ENCODE measurements at regions of chr1 and their contacts with region 1.

Region 1: DNA sequence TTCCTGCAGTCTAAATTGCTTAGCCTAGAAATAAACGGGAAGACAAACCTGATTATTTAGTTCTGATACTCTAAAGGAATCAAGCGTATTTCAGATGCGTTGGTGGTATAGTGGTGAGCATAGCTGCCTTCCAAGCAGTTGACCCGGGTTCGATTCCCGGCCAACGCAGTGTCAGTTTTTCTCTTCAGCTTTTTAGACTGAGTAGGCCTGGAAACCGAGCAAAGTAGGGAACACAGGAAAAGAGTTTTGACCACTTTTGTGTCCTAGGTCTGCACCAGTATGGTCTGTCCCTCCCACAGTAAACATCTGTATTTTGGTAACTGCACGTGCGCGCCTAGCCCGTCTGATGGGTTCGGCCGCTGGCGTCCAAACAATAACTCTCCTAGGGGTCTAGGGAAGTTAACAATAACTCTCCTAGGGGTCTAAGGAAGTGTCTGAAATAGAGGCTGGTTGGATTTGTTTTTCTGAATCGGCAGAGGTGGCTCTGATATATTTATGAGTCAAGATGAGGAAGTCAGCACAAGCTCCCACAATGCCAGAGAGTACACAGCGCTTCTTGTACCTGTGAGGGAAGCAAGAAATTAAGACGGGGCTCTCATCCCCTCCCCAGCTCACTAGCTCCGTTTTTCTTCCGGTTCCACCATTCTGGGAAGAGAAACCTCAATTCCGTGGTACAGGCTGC is 15.6 kb upstream of the HJV start:
- DNase-seq: peak; percentile 88
- ATAC-seq: peak; percentile 52
- H3K4me3 Mint-ChIP-seq: peak overlapping the region; percentile 91
- H3K27ac Mint-ChIP-seq: peak overlapping the region; percentile 95
- H3K4me1 Mint-ChIP-seq: peaks cover 48% of the 10 kb centered on the region
- H3K27me3 Mint-ChIP-seq: peaks cover 6% of the 10 kb centered on the region

Region 2: DNA sequence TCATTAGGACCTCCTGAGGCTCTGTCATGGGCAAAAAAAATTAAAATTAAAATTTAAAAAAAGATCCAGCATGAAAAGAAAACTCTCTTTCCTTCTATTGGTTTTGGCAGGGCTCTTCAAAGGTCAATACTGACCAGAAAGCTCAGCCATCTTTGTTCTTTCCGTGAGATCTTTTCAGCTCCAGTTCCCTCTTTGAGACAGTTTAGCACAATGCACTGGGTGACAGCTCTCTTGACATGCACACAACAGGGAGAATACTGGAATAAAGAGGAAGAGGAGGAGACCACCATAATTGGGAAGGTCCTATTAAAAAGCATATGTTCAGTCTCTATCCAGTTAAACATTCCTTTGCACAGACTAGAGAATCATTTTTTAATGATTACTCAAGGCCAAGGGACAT is 85.6 kb before region 1 on chr1:
- CTCF ChIA-PET with region 1: no interaction called
- POLR2A ChIA-PET with region 1: no interaction called
- DNase-seq: no peak
- ATAC-seq: no peak
- H3K4me3 Mint-ChIP-seq: no peak overlapping the region
- H3K27ac Mint-ChIP-seq: no peak overlapping the region
- H3K4me1 Mint-ChIP-seq: peaks cover 42% of the 10 kb centered on the region
- H3K27me3 Mint-ChIP-seq: no peaks in the 10 kb centered on the region

Region 3: GRCh38 chr1:146007506-146008133 is 29.5 kb before region 1 on chr1:
- CTCF ChIA-PET with region 1: interaction called, 10 read pairs
- POLR2A ChIA-PET with region 1: interaction called, 3 read pairs
- DNase-seq: no peak
- ATAC-seq: no peak
- H3K4me3 Mint-ChIP-seq: peak overlapping the region; percentile 69
- H3K27ac Mint-ChIP-seq: peak overlapping the region; percentile 91
- H3K4me1 Mint-ChIP-seq: peaks cover 39% of the 10 kb centered on the region
- H3K27me3 Mint-ChIP-seq: no peaks in the 10 kb centered on the region

Region 4: DNA sequence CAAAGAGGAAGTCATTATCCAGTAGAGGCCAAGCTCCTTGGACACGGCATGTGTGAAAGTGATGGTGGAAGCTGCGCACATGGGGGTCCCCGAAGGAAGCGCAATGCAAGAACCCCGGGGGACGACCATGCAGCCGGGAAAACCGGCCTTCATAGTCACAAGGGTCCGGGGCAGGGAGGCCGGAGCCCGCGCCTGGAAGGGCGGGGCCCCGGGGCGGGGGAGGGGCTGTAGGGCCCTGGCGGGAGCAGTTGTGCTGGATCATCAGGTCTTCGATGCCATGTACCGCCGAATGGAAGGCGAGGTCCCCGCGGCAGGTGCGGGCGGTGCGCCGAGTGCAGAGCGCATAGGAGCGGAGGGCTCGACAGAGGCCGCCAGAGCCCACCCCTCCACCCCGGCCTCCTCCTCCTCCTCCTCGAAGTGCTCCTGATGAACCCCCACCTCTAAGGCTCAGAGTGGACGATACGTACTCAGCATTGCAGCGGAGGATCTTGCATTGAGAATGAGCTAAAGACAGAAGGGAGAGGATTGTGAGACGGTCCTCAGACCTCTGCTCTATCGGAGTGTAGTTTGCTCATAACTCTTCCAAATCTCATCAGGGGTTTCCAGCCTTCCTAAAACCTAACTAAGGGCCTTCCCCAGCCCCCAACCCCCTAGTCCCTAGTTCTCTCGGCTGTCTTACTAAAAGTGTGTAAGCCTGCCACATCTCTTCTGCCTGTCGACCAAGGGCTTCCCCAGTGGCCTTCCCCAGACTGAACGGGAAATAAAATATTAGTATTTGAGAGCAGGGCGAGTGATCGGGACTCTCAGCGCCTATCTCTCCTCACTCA is 17.7 kb before region 1 on chr1:
- CTCF ChIA-PET with region 1: interaction called, 32 read pairs
- POLR2A ChIA-PET with region 1: interaction called, 5 read pairs
- DNase-seq: no peak
- ATAC-seq: peak; percentile 44
- H3K4me3 Mint-ChIP-seq: no peak overlapping the region
- H3K27ac Mint-ChIP-seq: no peak overlapping the region
- H3K4me1 Mint-ChIP-seq: peaks cover 6% of the 10 kb centered on the region
- H3K27me3 Mint-ChIP-seq: peaks cover 64% of the 10 kb centered on the region

Region 5: GRCh38 chr1:146049436-146049835 is 12.3 kb after region 1 on chr1:
- CTCF ChIA-PET with region 1: interaction called, 11 read pairs
- POLR2A ChIA-PET with region 1: interaction called, 207 read pairs
- DNase-seq: no peak
- ATAC-seq: no peak
- H3K4me3 Mint-ChIP-seq: no peak overlapping the region
- H3K27ac Mint-ChIP-seq: peak overlapping the region; percentile 39
- H3K4me1 Mint-ChIP-seq: peaks cover 33% of the 10 kb centered on the region
- H3K27me3 Mint-ChIP-seq: peaks cover 5% of the 10 kb centered on the region